HEK293T (cell line): ENCODE measurements at regions of chr17 and their contacts with region 1.

Region 1: DNA sequence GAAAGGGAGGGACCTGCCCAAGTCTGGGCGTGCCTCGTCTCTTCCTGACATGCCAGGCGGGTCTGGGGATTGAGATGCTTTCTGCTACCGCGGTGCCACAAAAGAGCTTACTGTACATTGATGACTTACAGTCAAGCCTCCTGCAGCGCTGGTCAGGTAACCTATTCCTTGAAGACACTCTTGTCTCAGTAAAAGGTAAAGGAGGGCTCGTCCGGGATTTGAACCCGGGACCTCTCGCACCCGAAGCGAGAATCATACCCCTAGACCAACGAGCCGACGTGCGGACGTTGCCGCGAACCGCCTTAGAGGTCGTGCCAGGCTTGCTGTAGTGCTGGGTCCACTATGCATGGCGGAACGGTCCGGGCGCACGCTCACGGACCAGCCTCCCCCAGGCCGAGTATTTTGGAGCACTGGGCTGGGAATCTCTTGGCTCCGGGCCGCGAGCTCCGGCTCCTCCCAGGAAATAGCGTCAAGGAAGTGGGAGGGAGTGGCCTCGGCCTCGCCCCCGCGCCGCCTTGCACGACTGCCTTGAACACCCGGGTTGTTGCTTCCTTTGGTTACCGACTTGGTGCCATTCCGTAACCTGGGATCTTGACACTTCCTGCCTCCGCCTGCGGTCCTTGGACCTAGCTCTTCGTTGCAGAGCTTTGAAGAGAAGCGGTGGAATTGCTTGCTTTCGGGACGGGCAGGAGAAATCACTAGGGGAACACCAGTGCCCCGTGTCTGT is 12.4 kb upstream of the AURKB start:
- DNase-seq: peak; percentile 64

Region 2: GRCh38 chr17:8041249-8041928 is 181.4 kb before region 1 on chr17:
- CTCF ChIA-PET with region 1: no interaction called
- POLR2A ChIA-PET with region 1: no interaction called
- DNase-seq: peak; percentile 42

Region 3: DNA sequence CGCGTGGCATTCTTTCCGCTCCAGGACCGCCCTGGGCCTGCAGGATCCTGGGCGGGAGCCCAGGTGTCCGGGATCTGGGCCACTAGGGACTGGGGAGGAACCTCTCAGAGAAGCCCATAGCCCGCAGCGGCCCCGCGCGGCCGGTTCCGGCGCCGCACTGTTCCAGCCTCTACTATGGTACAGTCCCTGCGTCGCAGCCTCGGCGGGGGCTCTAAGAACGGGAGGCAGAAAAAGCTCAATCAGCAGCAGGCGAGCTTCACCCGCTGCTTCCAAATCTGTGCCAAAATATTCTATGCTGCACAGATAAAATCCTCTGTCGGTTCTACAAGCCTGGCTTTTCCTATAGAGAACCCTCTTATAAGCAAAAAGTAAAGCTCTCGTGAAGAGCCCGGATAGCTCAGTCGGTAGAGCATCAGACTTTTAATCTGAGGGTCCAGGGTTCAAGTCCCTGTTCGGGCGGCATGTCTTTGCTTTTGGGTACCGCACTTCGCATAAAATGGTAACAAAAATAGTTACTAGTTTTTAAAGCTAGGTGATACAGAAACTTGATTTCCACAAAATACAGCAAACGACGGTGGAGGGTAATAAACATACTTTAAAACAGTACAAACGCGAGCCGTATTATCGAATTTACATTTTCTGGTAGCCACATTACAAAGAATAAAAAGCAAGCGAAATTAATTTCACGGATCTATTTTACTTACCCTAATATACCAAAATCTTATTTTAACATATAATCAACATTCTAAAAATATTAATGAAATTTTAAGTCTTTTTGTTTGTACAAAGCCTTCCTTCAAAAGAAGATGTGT is 103.8 kb before region 1 on chr17:
- CTCF ChIA-PET with region 1: interaction called, 7 read pairs
- POLR2A ChIA-PET with region 1: interaction called, 22 read pairs
- DNase-seq: peak; percentile 81

Region 4: DNA sequence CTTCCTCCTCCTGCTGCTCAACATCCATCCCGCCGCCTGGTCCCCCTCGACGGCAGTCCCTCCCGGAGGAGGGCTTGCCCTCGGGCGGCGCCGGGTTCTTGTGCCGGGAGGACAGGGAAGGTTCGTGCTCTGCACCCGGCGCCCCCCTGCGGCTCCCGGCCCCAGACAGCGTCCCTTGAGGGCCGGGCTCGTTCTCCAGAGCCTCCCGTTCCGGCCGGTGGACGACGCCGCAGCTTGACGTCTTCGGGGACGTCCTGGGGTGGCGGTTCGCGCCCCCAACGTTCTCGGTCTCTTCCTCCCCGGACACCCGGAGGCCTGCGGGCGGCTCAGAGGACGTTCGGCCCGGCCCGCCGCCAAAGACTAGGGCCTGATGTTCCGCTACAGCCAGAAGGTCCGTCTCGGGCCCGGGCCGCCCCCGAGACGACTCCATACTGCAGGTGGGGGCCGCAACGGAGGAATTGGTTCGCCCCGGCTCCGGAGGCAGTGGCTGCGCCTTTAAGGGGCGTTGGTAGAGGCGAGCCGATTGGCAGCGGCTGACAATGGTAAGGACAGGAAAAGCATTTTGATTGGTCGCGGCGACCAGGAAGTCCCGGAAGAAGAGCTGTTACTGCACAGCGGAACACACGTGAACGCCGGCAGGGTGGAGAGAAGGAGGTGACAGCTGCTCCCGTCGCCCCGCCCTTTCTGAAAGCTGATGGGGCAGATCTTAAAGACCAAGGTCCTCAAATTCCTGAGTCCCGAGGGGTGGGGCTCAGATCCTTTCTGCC is 32.9 kb before region 1 on chr17 and contains the start of gene BORCS6:
- CTCF ChIA-PET with region 1: interaction called, 5 read pairs
- POLR2A ChIA-PET with region 1: interaction called, 135 read pairs
- DNase-seq: peak; percentile 81

Region 5: GRCh38 chr17:8209909-8210760 is 12.7 kb before region 1 on chr17 and contains the start of gene AURKB:
- CTCF ChIA-PET with region 1: interaction called, 3 read pairs
- POLR2A ChIA-PET with region 1: interaction called, 98 read pairs
- DNase-seq: peak; percentile 92

Region 6: GRCh38 chr17:8294814-8295316 is 72.1 kb after region 1 on chr17:
- CTCF ChIA-PET with region 1: interaction called, 4 read pairs
- POLR2A ChIA-PET with region 1: interaction called, 34 read pairs
- DNase-seq: no peak